Right ventricle myocardium superior (tissue), 1 donor: ENCODE measurements at regions of chr6 and their contacts with region 1.

Region 1: GRCh38 chr6:151323791-151324487 is 67.4 kb downstream of the ZBTB2 start:
- DNase-seq: peak; percentile 90
- ATAC-seq: peak; percentile 93

Region 2: DNA sequence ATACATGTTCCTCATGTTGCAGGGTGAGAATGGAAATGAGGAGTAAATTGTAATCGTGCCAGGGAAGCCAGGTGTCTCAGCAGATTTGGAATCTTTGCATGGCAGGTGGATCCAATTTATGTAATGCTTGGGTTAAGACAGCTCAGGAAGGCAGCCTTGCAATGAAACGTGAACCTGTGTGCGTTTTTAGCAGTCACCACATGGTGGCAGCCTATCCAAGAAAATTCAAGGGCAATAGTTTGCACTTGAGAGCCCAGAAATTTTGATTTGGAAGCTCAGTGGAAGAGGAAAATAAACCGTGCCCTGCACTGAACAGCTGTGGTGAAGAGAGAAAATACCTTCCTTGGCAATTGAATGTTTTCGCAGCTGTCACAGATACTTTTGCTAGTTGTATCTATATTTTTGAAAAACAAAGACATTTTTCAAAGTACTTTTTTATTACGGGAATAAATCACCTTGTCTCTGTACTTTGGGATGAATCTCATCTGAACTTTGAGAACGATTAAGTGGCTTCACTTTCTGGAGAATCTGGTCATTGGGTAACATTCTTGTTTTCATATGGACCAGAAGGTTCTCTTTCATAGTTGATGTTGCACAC is 432.0 kb before region 1 on chr6:
- intact Hi-C with region 1: loop called (anchors 5 kb)
- DNase-seq: peak; percentile 67
- ATAC-seq: peak; percentile 86

Region 3: GRCh38 chr6:150967910-150968309 is 356.0 kb before region 1 on chr6:
- intact Hi-C with region 1: no loop called
- DNase-seq: no peak
- ATAC-seq: no peak

Region 4: DNA sequence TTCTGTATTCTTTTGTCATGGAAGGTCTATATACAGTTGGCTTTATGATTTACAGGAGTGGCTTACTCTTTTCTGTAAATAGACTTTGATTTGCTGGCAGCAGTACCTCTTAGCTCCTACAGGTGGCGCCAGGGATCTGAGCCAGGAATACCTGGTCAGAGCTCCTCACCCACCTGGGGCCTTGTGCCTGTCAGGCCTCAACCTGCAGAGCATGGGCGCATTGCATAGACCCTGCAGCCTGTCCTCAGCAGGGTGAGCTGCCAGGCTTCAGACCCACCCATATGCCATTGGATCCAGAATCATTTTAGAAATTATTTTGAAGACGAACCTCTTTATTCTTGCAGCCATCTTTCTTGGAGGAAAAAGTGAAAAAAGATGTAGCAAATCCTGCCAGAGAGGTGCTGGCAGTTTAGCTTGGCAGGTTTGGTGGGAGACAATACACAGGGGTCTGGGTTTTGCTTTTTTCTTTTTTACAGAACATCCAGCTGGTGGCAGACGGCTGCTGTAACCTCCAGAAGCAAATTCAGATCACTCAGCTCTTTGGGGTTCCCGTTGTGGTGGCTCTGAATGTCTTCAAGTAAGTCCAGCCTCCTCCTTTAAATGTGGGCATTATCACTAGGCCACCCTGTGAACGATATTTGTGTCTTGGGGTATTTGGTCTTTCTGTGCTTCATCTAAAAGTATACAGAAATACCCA is 309.4 kb before region 1 on chr6:
- intact Hi-C with region 1: loop called (anchors 2 kb)
- DNase-seq: peak; percentile 74
- ATAC-seq: peak; percentile 81

Region 5: GRCh38 chr6:151166196-151166595 is 157.7 kb before region 1 on chr6:
- intact Hi-C with region 1: no loop called
- DNase-seq: no peak
- ATAC-seq: no peak

Region 6: DNA sequence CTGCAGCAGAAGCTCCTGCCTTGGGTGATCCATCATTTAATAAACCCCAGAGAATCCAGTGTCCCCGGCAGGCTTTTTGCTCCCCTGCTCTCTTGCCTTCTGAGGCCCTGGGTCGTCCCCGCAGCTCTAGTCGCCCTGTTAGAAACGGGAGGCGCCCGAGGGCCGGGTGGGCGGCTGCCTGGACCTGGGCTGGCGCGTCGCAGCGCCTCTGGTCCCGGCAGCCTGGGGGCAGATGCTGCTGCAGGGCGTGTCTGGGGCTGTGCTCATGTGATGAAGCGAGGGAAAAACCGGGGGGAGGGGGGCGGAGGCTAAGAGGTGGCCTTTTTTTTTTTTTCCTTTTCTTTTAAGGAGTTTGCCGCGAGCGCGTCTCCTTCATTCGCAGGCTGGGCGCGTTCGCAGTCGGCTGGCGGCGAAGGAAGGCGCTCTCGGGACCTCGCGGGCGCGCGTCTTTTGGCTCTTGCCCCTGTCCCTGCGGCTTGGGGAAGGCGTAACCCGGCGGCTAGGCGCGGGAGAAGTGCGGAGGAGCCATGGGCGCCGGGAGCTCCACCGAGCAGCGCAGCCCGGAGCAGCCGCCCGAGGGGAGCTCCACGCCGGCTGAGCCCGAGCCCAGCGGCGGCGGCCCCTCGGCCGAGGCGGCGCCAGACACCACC is 83.8 kb before region 1 on chr6:
- intact Hi-C with region 1: loop called (anchors 5 kb)
- DNase-seq: peak; percentile 88
- ATAC-seq: peak; percentile 90

Region 7: GRCh38 chr6:151566557-151566956 is 242.6 kb after region 1 on chr6:
- intact Hi-C with region 1: no loop called
- DNase-seq: no peak
- ATAC-seq: no peak